Testis (tissue), 5 donors: ENCODE measurements at regions of chr15 and their contacts with region 1.

Region 1: DNA sequence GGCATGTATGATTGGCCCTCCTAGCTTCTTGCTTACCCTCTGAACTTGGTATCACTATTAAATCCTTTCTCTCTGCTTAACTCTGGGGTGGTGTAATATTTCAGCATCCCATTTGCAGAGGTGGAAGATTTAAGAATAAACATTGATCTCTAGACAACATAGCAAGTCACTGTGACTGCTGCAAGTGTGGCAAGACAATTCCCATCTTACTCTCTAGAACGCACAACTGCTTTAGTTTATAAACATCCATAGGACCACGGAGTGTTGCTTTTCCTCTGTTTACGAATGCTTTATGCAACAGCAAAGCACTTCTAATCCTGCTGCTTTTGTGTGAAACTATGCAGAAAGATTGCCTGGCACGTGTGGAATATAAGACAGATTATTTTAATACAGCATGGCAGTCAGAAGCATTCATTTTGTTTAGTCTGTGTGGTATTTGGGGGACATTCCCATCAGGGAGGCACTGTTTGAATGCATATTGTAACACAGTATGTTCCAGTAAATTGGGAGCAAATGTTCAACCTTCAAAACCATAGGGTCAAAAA is 338.9 kb upstream of the TMCO5A start:
- DNase-seq: no peak
- H3K4me3 ChIP-seq: no peak overlapping the region
- H3K27ac ChIP-seq: no peak overlapping the region
- H3K4me1 ChIP-seq: no peaks in the 10 kb centered on the region
- H3K27me3 ChIP-seq: no peaks in the 10 kb centered on the region
- CTCF ChIP-seq: no peak
- POLR2A ChIP-seq: no peak

Region 2: GRCh38 chr15:37298271-37298670 is 297.2 kb before region 1 on chr15:
- intact Hi-C with region 1: no loop called
- DNase-seq: no peak
- H3K4me3 ChIP-seq: no peak overlapping the region
- H3K27ac ChIP-seq: no peak overlapping the region
- H3K4me1 ChIP-seq: no peaks in the 10 kb centered on the region
- H3K27me3 ChIP-seq: no peaks in the 10 kb centered on the region
- CTCF ChIP-seq: no peak
- POLR2A ChIP-seq: no peak

Region 3: DNA sequence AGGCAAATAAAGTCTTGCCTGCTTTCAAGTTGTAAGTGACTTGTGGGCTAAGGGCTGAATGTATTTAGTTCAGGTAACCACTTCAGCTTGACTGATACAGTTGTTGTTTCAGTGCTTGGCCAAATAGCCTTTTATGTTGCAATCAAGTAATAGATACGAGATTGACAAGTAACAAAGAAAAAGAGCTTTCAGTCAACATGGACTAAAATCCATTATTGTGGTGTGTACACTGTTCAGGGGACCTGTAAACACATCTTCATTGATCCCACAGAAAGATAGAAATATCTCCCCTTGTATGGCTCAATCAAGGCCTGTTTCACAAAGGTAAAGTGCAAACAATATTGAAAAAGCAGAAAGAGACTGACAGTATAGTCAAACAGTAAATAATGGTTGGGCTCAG is 114.2 kb after region 1 on chr15:
- intact Hi-C with region 1: loop called (anchors 10 kb)
- DNase-seq: no peak
- H3K4me3 ChIP-seq: no peak overlapping the region
- H3K27ac ChIP-seq: no peak overlapping the region
- H3K4me1 ChIP-seq: no peaks in the 10 kb centered on the region
- H3K27me3 ChIP-seq: no peaks in the 10 kb centered on the region
- CTCF ChIP-seq: no peak
- POLR2A ChIP-seq: no peak

Region 4: GRCh38 chr15:37751401-37751800 is 155.9 kb after region 1 on chr15:
- intact Hi-C with region 1: no loop called
- DNase-seq: no peak
- H3K4me3 ChIP-seq: no peak overlapping the region
- H3K27ac ChIP-seq: no peak overlapping the region
- H3K4me1 ChIP-seq: no peaks in the 10 kb centered on the region
- H3K27me3 ChIP-seq: no peaks in the 10 kb centered on the region
- CTCF ChIP-seq: no peak
- POLR2A ChIP-seq: no peak